WTC11 (cell line): ENCODE measurements at regions of chr1 and their contacts with region 1.

Region 1: GRCh38 chr1:19374083-19374801 is 62.1 kb downstream of the SLC66A1 start:
- DNase-seq: peak; percentile 79
- ATAC-seq: peak; percentile 90
- H3K4me3 Mint-ChIP-seq: no peak overlapping the region
- H3K27ac Mint-ChIP-seq: no peak overlapping the region
- H3K4me1 Mint-ChIP-seq: no peaks in the 10 kb centered on the region
- H3K27me3 Mint-ChIP-seq: no peaks in the 10 kb centered on the region
- CTCF ChIP-seq: peak; percentile 81

Region 2: DNA sequence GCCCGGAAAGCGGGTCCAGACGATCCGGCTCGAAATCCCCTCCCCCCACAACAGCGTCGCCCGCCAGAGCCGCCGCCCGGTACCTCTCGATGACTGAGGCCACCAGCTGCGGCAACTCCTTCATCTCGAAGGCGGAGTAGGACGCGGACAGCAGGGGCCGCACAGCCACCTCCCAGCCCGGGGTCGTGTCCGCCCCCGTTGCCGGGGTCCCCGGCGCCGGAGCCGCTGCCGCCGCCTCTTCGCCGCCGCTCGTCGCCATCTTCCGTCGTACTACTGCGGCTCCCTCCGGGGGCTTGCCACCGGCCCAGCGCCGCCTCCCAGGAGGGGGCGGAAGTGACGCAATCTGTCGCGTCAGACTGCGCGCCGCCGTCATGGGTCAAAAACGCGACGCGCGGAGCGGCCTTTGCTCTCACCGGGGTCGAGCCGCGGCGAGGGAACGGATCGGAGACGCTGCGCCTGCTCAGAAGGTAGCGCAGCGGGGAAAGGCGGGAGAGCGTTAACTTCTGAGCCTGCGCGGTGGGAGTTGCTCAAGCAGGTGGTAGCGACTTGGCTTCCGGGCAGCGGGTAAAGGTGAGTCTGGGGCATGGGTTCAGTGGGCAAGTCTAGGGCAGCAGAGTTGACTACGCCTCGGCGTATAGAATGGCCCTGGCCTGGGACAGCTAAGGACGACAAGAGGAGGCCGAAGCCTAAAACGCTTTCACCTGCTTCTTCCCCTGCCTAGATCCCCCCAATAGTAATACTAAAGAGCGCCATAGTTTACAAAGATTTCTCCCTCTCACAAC is 164.1 kb before region 1 on chr1 and contains the start of gene UBR4:
- CTCF ChIA-PET with region 1: no interaction called
- POLR2A ChIA-PET with region 1: no interaction called
- DNase-seq: peak; percentile 95
- ATAC-seq: peak; percentile 93
- H3K4me3 Mint-ChIP-seq: peak within 1 kb of the TSS; percentile 94
- H3K27ac Mint-ChIP-seq: peak within 1 kb of the TSS; percentile 99
- H3K4me1 Mint-ChIP-seq: peaks cover 31% of the 10 kb centered on the region
- H3K27me3 Mint-ChIP-seq: no peaks in the 10 kb centered on the region
- CTCF ChIP-seq: no peak
- total RNA-seq, gene UBR4: 127 to 179 TPM (median 136 TPM) in 3 replicates

Region 3: GRCh38 chr1:19344372-19345230 is 29.6 kb before region 1 on chr1:
- CTCF ChIA-PET with region 1: interaction called, 14 read pairs
- POLR2A ChIA-PET with region 1: no interaction called
- DNase-seq: peak; percentile 81
- ATAC-seq: peak; percentile 74
- H3K4me3 Mint-ChIP-seq: no peak overlapping the region
- H3K27ac Mint-ChIP-seq: peak overlapping the region; percentile 65
- H3K4me1 Mint-ChIP-seq: peaks cover 14% of the 10 kb centered on the region
- H3K27me3 Mint-ChIP-seq: no peaks in the 10 kb centered on the region
- CTCF ChIP-seq: peak; percentile 94

Region 4: DNA sequence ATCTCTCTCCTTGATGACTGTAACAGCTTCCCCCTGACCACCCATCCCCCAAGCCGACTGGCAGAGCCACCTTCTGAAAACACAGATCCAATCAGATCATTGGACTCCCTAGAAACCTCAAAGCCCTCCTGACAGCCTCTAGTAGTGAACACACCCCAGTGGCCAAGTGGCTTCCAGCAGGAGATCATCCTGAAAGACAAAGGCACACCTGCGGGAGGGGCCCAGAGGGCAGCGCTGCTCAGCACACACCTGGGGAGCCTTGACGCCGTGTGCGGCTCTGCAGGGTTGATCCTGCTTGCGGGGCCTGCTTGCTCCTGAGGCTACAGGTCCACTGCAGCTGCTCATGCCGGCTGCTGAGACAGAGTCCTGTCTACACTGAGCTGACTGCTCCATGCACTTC is 20.6 kb before region 1 on chr1:
- CTCF ChIA-PET with region 1: interaction called, 21 read pairs
- POLR2A ChIA-PET with region 1: no interaction called
- DNase-seq: peak; percentile 79
- ATAC-seq: peak; percentile 94
- H3K4me3 Mint-ChIP-seq: peak overlapping the region; percentile 26; the same call in 1 of the 2 replicates
- H3K27ac Mint-ChIP-seq: peak overlapping the region; percentile 61
- H3K4me1 Mint-ChIP-seq: peaks cover 31% of the 10 kb centered on the region
- H3K27me3 Mint-ChIP-seq: no peaks in the 10 kb centered on the region
- CTCF ChIP-seq: no peak

Region 5: DNA sequence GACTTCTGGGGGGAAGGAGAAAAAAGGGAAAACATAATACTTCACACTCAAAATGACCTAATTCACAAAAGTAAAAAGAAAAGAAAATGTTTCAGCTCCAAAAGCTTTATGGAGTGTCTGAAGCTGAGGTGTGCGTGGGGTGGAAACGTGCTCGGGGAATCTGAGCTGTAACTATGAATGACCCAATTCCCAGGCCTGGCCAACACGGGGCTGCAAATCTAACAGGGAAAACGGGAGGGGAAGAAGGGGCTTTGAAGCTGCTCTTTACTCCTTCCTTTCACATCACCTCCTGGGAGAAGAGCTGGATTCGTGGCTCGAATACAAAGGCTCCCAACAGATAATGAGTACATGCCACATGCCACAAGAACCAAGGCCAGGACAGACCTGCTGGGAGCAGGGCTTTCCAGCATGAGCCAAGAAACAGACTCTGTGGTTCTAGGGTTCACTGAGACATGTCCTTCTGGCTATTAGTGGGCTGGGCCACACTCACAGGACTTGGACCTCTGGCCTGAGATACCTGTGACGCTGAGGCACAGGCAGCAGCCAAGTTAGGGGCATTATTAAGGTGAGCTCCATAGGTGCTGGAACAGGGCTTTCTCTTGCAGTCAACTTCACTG is 10.6 kb before region 1 on chr1:
- CTCF ChIA-PET with region 1: interaction called, 17 read pairs
- POLR2A ChIA-PET with region 1: interaction called, 4 read pairs
- DNase-seq: no peak
- ATAC-seq: no peak
- H3K4me3 Mint-ChIP-seq: no peak overlapping the region
- H3K27ac Mint-ChIP-seq: peak overlapping the region; percentile 64; the same call in 1 of the 2 replicates
- H3K4me1 Mint-ChIP-seq: peaks cover 10% of the 10 kb centered on the region
- H3K27me3 Mint-ChIP-seq: no peaks in the 10 kb centered on the region
- CTCF ChIP-seq: no peak

Region 6: GRCh38 chr1:19405761-19406487 is 31.7 kb after region 1 on chr1:
- CTCF ChIA-PET with region 1: interaction called, 14 read pairs
- POLR2A ChIA-PET with region 1: no interaction called
- DNase-seq: no peak
- ATAC-seq: no peak
- H3K4me3 Mint-ChIP-seq: no peak overlapping the region
- H3K27ac Mint-ChIP-seq: peak overlapping the region; percentile 48
- H3K4me1 Mint-ChIP-seq: peaks cover 70% of the 10 kb centered on the region
- H3K27me3 Mint-ChIP-seq: no peaks in the 10 kb centered on the region
- CTCF ChIP-seq: no peak

Region 7: GRCh38 chr1:19628879-19629278 is 254.6 kb after region 1 on chr1:
- CTCF ChIA-PET with region 1: interaction called, 4 read pairs
- POLR2A ChIA-PET with region 1: interaction called, 11 read pairs
- DNase-seq: no peak
- ATAC-seq: no peak; the same call in 1 of the 2 replicates
- H3K4me3 Mint-ChIP-seq: no peak overlapping the region
- H3K27ac Mint-ChIP-seq: 0 out of 2 replicates have a peak overlapping the region, but pooled peaks have one; percentile 81
- H3K4me1 Mint-ChIP-seq: peaks cover 18% of the 10 kb centered on the region
- H3K27me3 Mint-ChIP-seq: no peaks in the 10 kb centered on the region
- CTCF ChIP-seq: no peak